Calu3 (cell line): ENCODE measurements at regions of chr10 and their contacts with region 1.

Region 1: GRCh38 chr10:124106241-124106879 is 13.0 kb upstream of the CHST15 start:
- DNase-seq: peak; percentile 61
- H3K4me3 Mint-ChIP-seq: no peak overlapping the region
- H3K27ac Mint-ChIP-seq: peak overlapping the region; percentile 57
- H3K4me1 Mint-ChIP-seq: peaks cover 14% of the 10 kb centered on the region
- H3K27me3 Mint-ChIP-seq: no peaks in the 10 kb centered on the region
- CTCF ChIP-seq: no peak

Region 2: DNA sequence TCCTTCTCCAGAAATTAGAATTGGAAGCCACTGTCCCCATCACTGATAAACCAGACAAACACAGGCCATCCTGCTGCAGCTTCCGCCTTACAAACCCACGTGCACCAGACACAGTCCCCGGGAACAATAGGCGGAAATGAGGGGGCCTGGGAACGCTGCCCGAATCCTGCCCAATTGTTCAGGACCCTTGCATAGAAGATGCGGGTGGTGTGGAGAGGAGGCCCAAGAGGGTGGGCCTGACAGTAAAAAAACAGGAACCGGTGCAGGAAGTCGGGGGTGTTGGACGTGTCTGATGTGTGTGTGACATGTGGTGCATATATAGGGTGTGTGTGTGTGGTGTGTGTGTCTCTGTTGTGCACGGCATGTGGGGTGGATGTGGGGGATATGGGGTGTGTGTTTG is 13.6 kb after region 1 on chr10:
- CTCF ChIA-PET with region 1: no interaction called
- intact Hi-C with region 1: no loop called
- DNase-seq: no peak
- H3K4me3 Mint-ChIP-seq: no peak overlapping the region
- H3K27ac Mint-ChIP-seq: no peak overlapping the region
- H3K4me1 Mint-ChIP-seq: no peaks in the 10 kb centered on the region
- H3K27me3 Mint-ChIP-seq: no peaks in the 10 kb centered on the region
- CTCF ChIP-seq: no peak

Region 3: GRCh38 chr10:124152916-124153826 is 46.8 kb after region 1 on chr10:
- CTCF ChIA-PET with region 1: interaction called, 4 read pairs
- intact Hi-C with region 1: loop called (anchors 5 kb)
- DNase-seq: peak; percentile 67
- H3K4me3 Mint-ChIP-seq: no peak overlapping the region
- H3K27ac Mint-ChIP-seq: no peak overlapping the region
- H3K4me1 Mint-ChIP-seq: peaks cover 18% of the 10 kb centered on the region
- H3K27me3 Mint-ChIP-seq: no peaks in the 10 kb centered on the region
- CTCF ChIP-seq: no peak

Region 4: DNA sequence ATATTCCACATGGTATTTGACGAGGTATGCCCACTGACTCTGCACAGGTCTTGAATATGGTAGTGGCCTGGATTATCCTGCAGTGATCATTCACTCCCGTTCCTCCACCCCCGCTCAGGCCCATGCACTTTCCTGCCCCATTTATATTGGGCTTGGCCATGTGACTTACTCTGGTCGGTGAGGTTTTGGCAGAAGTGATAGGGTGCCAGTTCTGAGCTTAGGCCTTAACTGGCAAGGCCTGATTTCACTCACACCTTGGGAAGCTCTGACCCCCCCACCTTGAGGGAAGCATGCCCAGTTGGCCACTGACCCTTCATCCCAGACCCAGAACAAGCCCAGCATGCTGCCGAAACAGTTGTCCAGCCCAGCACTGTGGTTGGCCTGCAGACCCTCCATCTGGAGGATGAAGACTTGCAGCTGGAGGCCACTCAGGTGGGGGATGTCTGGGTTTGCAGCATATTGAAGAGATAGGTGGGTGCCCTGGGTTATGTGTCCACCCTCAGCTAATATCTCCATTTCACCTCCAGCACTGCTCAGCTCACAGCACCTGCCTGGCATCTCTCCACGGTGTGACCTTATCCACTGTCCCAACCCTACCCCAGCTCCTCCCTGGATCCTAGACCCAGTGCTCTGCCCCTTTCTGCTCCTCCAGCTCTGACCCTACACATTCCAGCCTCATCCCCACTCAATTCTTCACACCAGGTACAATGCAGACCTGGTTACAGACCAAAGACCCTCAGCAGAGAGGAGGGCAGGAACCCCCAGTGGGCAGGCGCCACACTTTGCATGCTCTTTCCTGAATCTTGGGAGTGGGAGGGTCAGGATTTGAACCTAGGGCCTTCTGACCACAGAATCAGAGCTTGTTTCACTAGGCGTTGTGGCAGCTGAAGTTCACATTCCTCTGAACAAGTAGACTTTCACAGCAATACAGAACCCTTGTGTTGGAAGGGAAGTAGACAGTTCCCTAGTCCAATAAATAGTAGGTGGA is 125.1 kb after region 1 on chr10:
- CTCF ChIA-PET with region 1: no interaction called
- intact Hi-C with region 1: no loop called
- DNase-seq: no peak
- H3K4me3 Mint-ChIP-seq: no peak overlapping the region
- H3K27ac Mint-ChIP-seq: no peak overlapping the region
- H3K4me1 Mint-ChIP-seq: no peaks in the 10 kb centered on the region
- H3K27me3 Mint-ChIP-seq: peaks cover 24% of the 10 kb centered on the region
- CTCF ChIP-seq: no peak